T-cell (primary cell): ENCODE measurements at regions of chr6 and their contacts with region 1.

Region 1: DNA sequence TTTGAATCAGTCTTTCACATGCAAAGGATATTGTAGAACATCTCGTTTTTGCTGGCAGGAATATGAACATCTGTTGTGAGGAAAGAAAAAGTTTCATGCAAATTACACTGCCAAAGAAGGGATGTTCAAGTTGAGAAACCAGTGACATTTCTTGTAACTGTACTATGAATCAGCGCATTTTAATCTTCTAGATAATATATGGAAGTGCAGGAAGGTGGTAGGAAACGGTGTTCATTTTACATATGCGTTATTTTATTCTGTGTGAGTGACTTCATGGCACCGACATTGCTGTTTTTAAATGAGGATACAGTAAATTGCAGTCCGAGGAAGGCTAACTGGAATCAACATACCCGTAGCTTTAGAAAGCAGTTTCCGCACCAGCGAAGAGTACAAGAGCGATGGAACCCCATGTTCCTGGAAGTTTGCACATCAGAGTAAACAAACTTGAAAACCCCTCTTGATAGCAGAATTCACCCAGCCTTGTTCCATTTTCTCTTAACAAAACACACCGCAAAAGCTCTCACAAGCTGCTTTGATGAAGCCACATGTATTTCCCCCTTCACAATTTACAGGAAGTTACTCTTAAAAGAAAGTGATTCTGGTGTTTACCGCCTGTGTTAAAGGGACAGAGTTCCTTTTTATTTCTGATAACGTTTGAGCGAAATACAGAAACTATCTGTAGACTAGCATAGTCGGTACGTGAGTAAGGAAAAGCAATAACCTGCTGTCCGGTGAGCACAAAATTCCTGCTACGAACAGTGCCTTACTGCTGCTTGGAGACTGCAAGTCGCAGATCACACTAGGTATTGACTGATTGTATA is 11.5 kb downstream of the PRDM1 start:
- DNase-seq: peak in 33 of 35 experiments; percentile 16 to 89 (median 63)
- ATAC-seq: peak; percentile 74 to 80 (median 76)
- H3K4me3 ChIP-seq: peak overlapping the region; percentile 74 to 75
- H3K4me3 Mint-ChIP-seq: peak overlapping the region; percentile 88 to 93 (median 88)
- H3K27ac ChIP-seq: peak overlapping the region; percentile 85
- H3K27ac Mint-ChIP-seq: peak overlapping the region; percentile 96 to 98
- H3K4me1 ChIP-seq: peaks cover 23 to 31% of the 10 kb centered on the region in 2 experiments
- H3K4me1 Mint-ChIP-seq: peaks cover 91 to 93% (median 93%) of the 10 kb centered on the region in 3 donors
- H3K27me3 ChIP-seq: no peaks in the 10 kb centered on the region
- H3K27me3 Mint-ChIP-seq: no peaks in the 10 kb centered on the region

Region 2: GRCh38 chr6:106117579-106117978 is 20.0 kb after region 1 on chr6:
- CTCF ChIA-PET with region 1: interaction called, 6 read pairs
- POLR2A ChIA-PET with region 1: interaction called, 3 to 14 read pairs
- DNase-seq: peak in 33 of 35 experiments; percentile 46 to 89 (median 77)
- ATAC-seq: peak; percentile 88 to 95 (median 90)
- H3K4me3 ChIP-seq: no peak overlapping the region
- H3K4me3 Mint-ChIP-seq: peak overlapping the region in 1 of 3 donors; percentile 60
- H3K27ac ChIP-seq: peak overlapping the region; percentile 74
- H3K27ac Mint-ChIP-seq: peak overlapping the region; percentile 85
- H3K4me1 ChIP-seq: peaks cover 31 to 56% of the 10 kb centered on the region in 2 experiments
- H3K4me1 Mint-ChIP-seq: peaks cover 64 to 71% (median 65%) of the 10 kb centered on the region in 3 donors
- H3K27me3 ChIP-seq: no peaks in the 10 kb centered on the region
- H3K27me3 Mint-ChIP-seq: peaks cover 0 to 2% of the 10 kb centered on the region in 2 donors